ENCODE measurements at regions of chr2 and their contacts with region 1.

Region 1: GRCh38 chr2:207334624-207335371 is 169.1 kb upstream of the KLF7 start:
- DNase-seq: peak; percentile 62
- ATAC-seq: peak; percentile 48
- H3K4me3 ChIP-seq: peak overlapping the region in 1 of 2 experiments; percentile 36; a peak in 2 of 4 replicates
- H3K27ac ChIP-seq: peak overlapping the region; percentile 25
- H3K4me1 ChIP-seq: peaks cover 26 to 59% of the 10 kb centered on the region in 2 experiments
- H3K27me3 ChIP-seq: no peaks in the 10 kb centered on the region
- CTCF ChIP-seq: no peak
- POLR2A ChIP-seq: no peak
- RAD21 ChIP-seq: peak; percentile 17; the same call in 1 of the 2 replicates

Region 2: DNA sequence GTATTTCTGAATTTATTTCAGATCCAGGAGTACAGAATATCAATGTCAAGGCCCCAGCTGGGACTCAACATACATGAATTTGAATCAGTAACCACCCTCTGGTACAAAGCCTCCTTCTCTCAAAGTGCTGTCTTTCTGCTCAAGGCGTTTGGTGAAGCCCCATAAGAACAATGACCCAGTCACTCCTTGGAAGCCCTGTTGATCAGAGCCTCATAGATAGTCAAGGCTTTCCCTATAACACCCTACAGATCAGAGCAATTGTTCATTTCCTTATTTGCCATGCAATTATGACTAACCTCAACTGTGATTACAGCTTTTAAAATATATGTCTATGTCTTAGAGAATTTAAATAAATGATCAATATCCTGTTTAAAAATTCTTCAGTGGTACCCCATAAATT is 35.8 kb after region 1 on chr2:
- CTCF ChIA-PET with region 1: no interaction called
- POLR2A ChIA-PET with region 1: no interaction called
- RAD21 ChIA-PET with region 1: no interaction called
- intact Hi-C with region 1: no loop called
- DNase-seq: no peak
- ATAC-seq: no peak
- H3K4me3 ChIP-seq: no peak overlapping the region
- H3K27ac ChIP-seq: no peak overlapping the region
- H3K4me1 ChIP-seq: peaks cover 0 to under 1% of the 10 kb centered on the region in 2 experiments; a peak in 1 of 4 replicates
- H3K27me3 ChIP-seq: no peaks in the 10 kb centered on the region
- CTCF ChIP-seq: no peak
- POLR2A ChIP-seq: no peak
- RAD21 ChIP-seq: no peak

Region 3: GRCh38 chr2:207394812-207395534 is 60.2 kb after region 1 on chr2:
- CTCF ChIA-PET with region 1: no interaction called
- POLR2A ChIA-PET with region 1: interaction called, 3 read pairs
- RAD21 ChIA-PET with region 1: no interaction called
- intact Hi-C with region 1: loop called (anchors 5 kb)
- DNase-seq: peak; percentile 97
- ATAC-seq: peak; percentile 83
- H3K4me3 ChIP-seq: peak overlapping the region in 1 of 2 experiments; percentile 1; a peak in 2 of 4 replicates
- H3K27ac ChIP-seq: peak overlapping the region; percentile 9; the same call in 1 of the 2 replicates
- H3K4me1 ChIP-seq: peaks cover 12 to 26% of the 10 kb centered on the region in 2 experiments
- H3K27me3 ChIP-seq: no peaks in the 10 kb centered on the region
- CTCF ChIP-seq: no peak
- POLR2A ChIP-seq: no peak
- RAD21 ChIP-seq: peak; percentile 35; the same call in 1 of the 2 replicates

Region 4: GRCh38 chr2:207854484-207855440 is 520.0 kb after region 1 on chr2:
- CTCF ChIA-PET with region 1: no interaction called
- POLR2A ChIA-PET with region 1: no interaction called
- RAD21 ChIA-PET with region 1: no interaction called
- intact Hi-C with region 1: no loop called
- DNase-seq: no peak
- ATAC-seq: no peak
- H3K4me3 ChIP-seq: no peak overlapping the region
- H3K27ac ChIP-seq: no peak overlapping the region
- H3K4me1 ChIP-seq: no peaks in the 10 kb centered on the region
- H3K27me3 ChIP-seq: no peaks in the 10 kb centered on the region
- CTCF ChIP-seq: no peak
- POLR2A ChIP-seq: no peak
- RAD21 ChIP-seq: no peak